ENCODE measurements at regions of chr4 and their contacts with region 1.

Region 1: GRCh38 chr4:87026800-87027495 is 92.1 kb downstream of the AFF1 start:
- DNase-seq: no peak
- H3K4me3 ChIP-seq: no peak overlapping the region
- H3K4me3 Mint-ChIP-seq: no peak overlapping the region
- H3K27ac Mint-ChIP-seq: peak overlapping the region; percentile 50
- H3K4me1 ChIP-seq: peaks cover 61% of the 10 kb centered on the region
- H3K4me1 Mint-ChIP-seq: peaks cover 25% of the 10 kb centered on the region
- H3K27me3 ChIP-seq: no peaks in the 10 kb centered on the region
- H3K27me3 Mint-ChIP-seq: no peaks in the 10 kb centered on the region
- CTCF ChIP-seq: no peak

Region 2: GRCh38 chr4:86927843-86928395 is 99.0 kb before region 1 on chr4:
- CTCF ChIA-PET with region 1: no interaction called
- POLR2A ChIA-PET with region 1: no interaction called
- intact Hi-C with region 1: loop called (anchors 1 kb)
- DNase-seq: peak in 1 of 2 experiments; percentile 12
- H3K4me3 ChIP-seq: no peak overlapping the region
- H3K4me3 Mint-ChIP-seq: no peak overlapping the region
- H3K27ac Mint-ChIP-seq: peak overlapping the region; percentile 84
- H3K4me1 ChIP-seq: peaks cover 29% of the 10 kb centered on the region
- H3K4me1 Mint-ChIP-seq: peaks cover 35% of the 10 kb centered on the region
- H3K27me3 ChIP-seq: no peaks in the 10 kb centered on the region
- H3K27me3 Mint-ChIP-seq: no peaks in the 10 kb centered on the region
- CTCF ChIP-seq: no peak

Region 3: DNA sequence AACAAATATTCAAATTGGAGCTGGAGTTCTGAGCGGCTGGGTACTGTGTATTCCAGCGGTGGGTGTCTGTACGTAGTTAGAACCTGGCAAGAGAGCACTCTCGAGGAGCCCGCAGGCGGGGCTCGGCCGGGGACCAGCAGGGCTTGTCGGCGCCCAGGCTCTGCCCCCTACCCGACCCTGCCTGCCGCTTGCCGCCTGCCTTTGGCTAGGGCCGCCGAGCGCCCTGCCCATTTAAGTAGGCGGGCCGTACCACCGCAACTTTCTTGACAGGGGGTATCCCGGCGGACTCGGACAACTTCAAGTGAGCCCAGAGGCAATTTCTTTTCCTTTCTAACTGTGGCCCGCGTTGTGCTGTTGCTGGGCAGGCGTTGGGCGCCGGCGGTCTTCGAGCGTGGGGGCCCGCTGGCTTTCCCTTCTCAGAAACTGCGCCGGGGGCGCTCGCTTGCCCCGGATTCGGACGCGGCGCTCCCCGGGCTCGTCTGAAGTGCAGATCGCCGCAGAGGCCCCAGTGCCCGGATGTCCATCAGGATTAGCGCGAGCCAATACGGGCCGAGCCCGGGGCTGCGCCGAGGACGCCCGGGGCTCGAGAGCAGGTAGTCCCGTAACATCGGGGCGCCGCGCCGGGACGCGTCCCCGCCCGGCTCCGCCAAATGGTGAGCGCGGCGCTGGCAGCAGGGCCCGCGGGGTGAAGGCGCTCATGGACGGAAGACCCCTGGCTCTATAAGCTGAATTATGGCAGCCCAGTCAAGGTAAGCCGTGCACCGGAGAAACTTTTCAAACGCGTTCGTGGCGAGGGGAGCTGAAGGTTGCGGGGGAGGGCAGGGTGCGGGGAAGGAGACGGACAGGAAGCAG is 20.0 kb before region 1 on chr4:
- CTCF ChIA-PET with region 1: interaction called, 10 read pairs
- POLR2A ChIA-PET with region 1: no interaction called
- intact Hi-C with region 1: loop called (anchors 1 kb)
- DNase-seq: peak; percentile 95
- H3K4me3 ChIP-seq: peak overlapping the region; percentile 94
- H3K4me3 Mint-ChIP-seq: peak overlapping the region; percentile 97
- H3K27ac Mint-ChIP-seq: peak overlapping the region; percentile 93
- H3K4me1 ChIP-seq: peaks cover 41% of the 10 kb centered on the region
- H3K4me1 Mint-ChIP-seq: peaks cover 8% of the 10 kb centered on the region
- H3K27me3 ChIP-seq: no peaks in the 10 kb centered on the region
- H3K27me3 Mint-ChIP-seq: no peaks in the 10 kb centered on the region
- CTCF ChIP-seq: peak in 1 of 2 experiments; percentile 30

Region 4: DNA sequence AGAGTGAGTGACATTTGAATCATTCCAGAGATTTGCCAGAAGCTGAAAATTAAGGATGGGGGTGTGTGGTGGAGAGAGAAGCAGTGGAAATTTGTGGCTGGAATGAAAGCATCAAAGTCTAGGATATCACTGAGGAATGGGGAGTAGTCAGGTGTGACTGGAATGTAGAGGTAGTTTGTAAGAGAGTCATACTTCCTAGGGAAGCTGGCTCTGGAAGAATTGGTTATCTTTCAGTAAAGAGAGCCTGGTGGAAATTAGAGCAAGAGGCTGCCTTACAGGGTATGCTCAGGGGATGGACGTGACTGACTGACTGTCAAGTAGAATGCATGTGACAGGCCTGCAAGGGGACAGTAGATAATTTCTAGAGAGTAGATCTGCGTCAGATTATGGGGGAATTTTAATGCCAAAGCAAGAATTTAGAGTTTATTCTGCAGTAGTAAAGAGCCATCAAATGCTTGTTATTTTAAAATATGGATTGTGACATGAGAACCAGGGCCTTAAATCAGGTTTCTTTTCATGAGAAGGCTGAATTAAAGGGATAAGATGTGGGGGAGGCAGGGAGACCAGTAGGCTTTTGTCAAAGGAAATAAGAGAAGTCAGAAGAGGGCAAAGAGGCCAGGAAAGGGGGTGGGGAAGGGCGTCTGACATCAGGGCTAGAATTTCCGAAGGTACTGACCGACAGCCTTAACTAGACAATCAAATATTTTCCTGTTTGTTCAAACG is 17.7 kb after region 1 on chr4:
- CTCF ChIA-PET with region 1: no interaction called
- POLR2A ChIA-PET with region 1: no interaction called
- intact Hi-C with region 1: loop called (anchors 2 kb)
- DNase-seq: no peak
- H3K4me3 ChIP-seq: no peak overlapping the region
- H3K4me3 Mint-ChIP-seq: no peak overlapping the region
- H3K27ac Mint-ChIP-seq: no peak overlapping the region
- H3K4me1 ChIP-seq: peaks cover 18% of the 10 kb centered on the region
- H3K4me1 Mint-ChIP-seq: no peaks in the 10 kb centered on the region
- H3K27me3 ChIP-seq: no peaks in the 10 kb centered on the region
- H3K27me3 Mint-ChIP-seq: no peaks in the 10 kb centered on the region
- CTCF ChIP-seq: no peak

Region 5: DNA sequence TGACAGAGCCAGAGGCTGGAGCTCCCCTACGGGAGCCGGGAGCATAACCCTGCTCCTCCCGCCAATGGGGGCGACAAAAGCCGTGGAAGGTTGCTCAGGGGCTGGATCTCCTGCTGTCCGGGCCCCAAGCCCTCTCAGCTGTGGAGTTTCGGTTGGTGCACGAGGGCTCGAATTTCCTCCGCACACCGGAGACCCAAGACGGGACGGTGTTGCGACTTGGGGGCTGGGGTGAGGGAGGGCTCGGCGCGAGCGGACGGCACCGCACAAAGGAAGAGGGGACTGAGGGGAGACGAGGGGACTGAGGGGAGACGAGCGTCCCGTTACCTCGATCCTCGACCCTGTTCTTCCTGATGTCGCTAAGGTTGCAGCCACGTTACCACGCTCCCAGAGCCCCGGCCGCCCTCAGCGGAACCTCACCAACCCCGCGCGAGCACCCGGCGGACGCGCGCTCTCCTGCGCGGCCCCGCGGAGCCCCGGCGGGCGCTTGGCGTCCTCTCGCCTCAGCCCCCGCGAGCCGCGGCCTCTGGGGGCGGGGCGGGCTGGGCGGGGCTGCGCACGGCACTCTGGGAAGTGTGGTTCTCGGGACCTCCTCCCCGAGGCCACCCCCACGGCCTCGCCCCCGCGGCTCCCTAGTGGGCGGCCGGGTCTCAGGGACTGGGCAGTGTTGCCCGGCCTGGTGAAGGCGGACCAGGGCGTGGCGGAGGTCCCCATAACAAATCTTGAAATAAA is 193.3 kb after region 1 on chr4 and contains the start of gene KLHL8:
- CTCF ChIA-PET with region 1: no interaction called
- POLR2A ChIA-PET with region 1: no interaction called
- intact Hi-C with region 1: loop called (anchors 10 kb)
- DNase-seq: peak; percentile 87 to 94
- H3K4me3 ChIP-seq: peak within 1 kb of the TSS; percentile 94
- H3K4me3 Mint-ChIP-seq: peak within 1 kb of the TSS; percentile 94
- H3K27ac Mint-ChIP-seq: peak within 1 kb of the TSS; percentile 93
- H3K4me1 ChIP-seq: peaks cover 18% of the 10 kb centered on the region; the same call in 1 of the 2 replicates
- H3K4me1 Mint-ChIP-seq: peaks cover 30% of the 10 kb centered on the region
- H3K27me3 ChIP-seq: no peaks in the 10 kb centered on the region
- H3K27me3 Mint-ChIP-seq: no peaks in the 10 kb centered on the region
- CTCF ChIP-seq: peak in 1 of 2 experiments; percentile 33
- total RNA-seq, gene KLHL8: 23.4 and 27.7 TPM in 2 replicates

Measured in Caco-2 (cell line).